ENCODE measurements at regions of chr4 and their contacts with region 1.

Region 1: GRCh38 chr4:170990989-170991589 is 822.1 kb upstream of the GALNTL6 start:
- DNase-seq: peak; percentile 16
- H3K4me3 ChIP-seq: no peak overlapping the region
- H3K27ac ChIP-seq: no peak overlapping the region
- H3K4me1 ChIP-seq: no peaks in the 10 kb centered on the region
- H3K27me3 ChIP-seq: no peaks in the 10 kb centered on the region
- CTCF ChIP-seq: peak; percentile 56 to 74

Region 2: GRCh38 chr4:172202480-172203076 is 1211.5 kb after region 1 on chr4:
- CTCF ChIA-PET with region 1: no interaction called
- dilution Hi-C with region 1: no loop called
- in situ Hi-C with region 1: no loop called
- intact Hi-C with region 1: loop called (anchors 10 kb)
- DNase-seq: no peak
- H3K4me3 ChIP-seq: no peak overlapping the region
- H3K27ac ChIP-seq: no peak overlapping the region
- H3K4me1 ChIP-seq: no peaks in the 10 kb centered on the region
- H3K27me3 ChIP-seq: no peaks in the 10 kb centered on the region
- CTCF ChIP-seq: peak; percentile 62 to 75